Aorta (tissue), 5 donors: ENCODE measurements at regions of chr10 and their contacts with region 1.

Region 1: GRCh38 chr10:931416-932318 is at the start of gene LARP4B:
- DNase-seq: peak; percentile 98 to 99
- ATAC-seq: peak; percentile 100
- H3K4me3 ChIP-seq: peak within 1 kb of the TSS; percentile 97
- H3K27ac ChIP-seq: peak within 1 kb of the TSS; percentile 88 to 95
- H3K4me1 ChIP-seq: peaks cover 0 to 3% of the 10 kb centered on the region in 2 donors
- H3K27me3 ChIP-seq: no peaks in the 10 kb centered on the region
- total RNA-seq, gene LARP4B: 73.2 to 82.4 TPM

Region 2: GRCh38 chr10:683448-684071 is 248.1 kb before region 1 on chr10:
- intact Hi-C with region 1: loop called in 1 of 2 experiments (anchors 5 kb)
- DNase-seq: peak; percentile 72 to 86
- ATAC-seq: peak; percentile 87
- H3K4me3 ChIP-seq: no peak overlapping the region
- H3K27ac ChIP-seq: peak overlapping the region; percentile 15 to 49
- H3K4me1 ChIP-seq: no peaks in the 10 kb centered on the region
- H3K27me3 ChIP-seq: no peaks in the 10 kb centered on the region

Region 3: GRCh38 chr10:851901-852300 is 79.8 kb before region 1 on chr10:
- intact Hi-C with region 1: no loop called
- DNase-seq: no peak
- ATAC-seq: no peak
- H3K4me3 ChIP-seq: no peak overlapping the region
- H3K27ac ChIP-seq: no peak overlapping the region
- H3K4me1 ChIP-seq: peaks cover 0 to 3% of the 10 kb centered on the region in 2 donors
- H3K27me3 ChIP-seq: no peaks in the 10 kb centered on the region

Region 4: GRCh38 chr10:955820-956217 is 24.2 kb after region 1 on chr10:
- intact Hi-C with region 1: no loop called
- DNase-seq: no peak
- ATAC-seq: no peak
- H3K4me3 ChIP-seq: no peak overlapping the region
- H3K27ac ChIP-seq: no peak overlapping the region
- H3K4me1 ChIP-seq: no peaks in the 10 kb centered on the region
- H3K27me3 ChIP-seq: no peaks in the 10 kb centered on the region

Region 5: DNA sequence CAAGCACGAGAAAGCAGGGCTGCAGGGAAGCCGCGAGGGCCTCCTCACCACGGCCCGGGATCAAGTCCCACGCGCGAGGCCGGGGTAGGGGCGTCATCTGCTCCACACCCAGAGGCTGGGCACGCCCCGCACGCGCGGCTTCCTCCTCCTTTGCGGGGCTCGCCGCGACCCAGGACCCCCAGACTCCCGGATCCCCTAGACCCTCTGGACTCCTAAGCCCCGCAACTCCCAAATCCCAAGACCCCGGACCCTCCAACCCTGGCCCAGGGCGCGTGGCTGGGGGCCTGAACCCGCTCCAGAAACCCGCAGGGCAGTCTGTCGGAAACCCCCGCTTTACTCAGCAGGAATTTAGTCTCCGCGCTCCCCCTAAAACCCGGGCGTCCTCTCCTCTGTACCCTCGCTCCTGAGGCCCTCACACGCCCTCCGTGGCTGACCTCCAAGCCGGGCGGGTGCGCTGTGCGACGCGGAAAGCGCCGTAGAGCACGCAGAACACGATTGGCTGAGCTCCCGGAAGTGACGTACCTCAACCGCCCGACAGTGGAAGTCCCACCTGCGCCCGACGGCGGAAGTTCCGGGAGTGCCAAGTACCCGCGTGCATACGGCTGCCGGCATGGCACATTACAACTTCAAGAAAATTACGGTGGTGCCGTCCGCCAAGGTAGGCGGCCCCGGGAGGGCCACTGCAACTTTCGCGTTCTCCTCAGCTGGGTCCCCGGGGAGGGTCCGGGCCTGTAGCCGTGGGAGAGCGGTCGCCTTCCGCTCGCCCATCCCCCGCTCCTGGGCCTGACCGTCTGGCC is 56.4 kb after region 1 on chr10 and contains the start of gene GTPBP4:
- intact Hi-C with region 1: loop called in 1 of 2 experiments (anchors 5 kb)
- DNase-seq: peak; percentile 99 to 100
- ATAC-seq: peak; percentile 99
- H3K4me3 ChIP-seq: peak within 1 kb of the TSS; percentile 70 to 81
- H3K27ac ChIP-seq: peak within 1 kb of the TSS in 1 of 2 donors; percentile 62
- H3K4me1 ChIP-seq: no peaks in the 10 kb centered on the region
- H3K27me3 ChIP-seq: no peaks in the 10 kb centered on the region
- total RNA-seq, gene GTPBP4: 29.2 to 46.9 TPM

Region 6: DNA sequence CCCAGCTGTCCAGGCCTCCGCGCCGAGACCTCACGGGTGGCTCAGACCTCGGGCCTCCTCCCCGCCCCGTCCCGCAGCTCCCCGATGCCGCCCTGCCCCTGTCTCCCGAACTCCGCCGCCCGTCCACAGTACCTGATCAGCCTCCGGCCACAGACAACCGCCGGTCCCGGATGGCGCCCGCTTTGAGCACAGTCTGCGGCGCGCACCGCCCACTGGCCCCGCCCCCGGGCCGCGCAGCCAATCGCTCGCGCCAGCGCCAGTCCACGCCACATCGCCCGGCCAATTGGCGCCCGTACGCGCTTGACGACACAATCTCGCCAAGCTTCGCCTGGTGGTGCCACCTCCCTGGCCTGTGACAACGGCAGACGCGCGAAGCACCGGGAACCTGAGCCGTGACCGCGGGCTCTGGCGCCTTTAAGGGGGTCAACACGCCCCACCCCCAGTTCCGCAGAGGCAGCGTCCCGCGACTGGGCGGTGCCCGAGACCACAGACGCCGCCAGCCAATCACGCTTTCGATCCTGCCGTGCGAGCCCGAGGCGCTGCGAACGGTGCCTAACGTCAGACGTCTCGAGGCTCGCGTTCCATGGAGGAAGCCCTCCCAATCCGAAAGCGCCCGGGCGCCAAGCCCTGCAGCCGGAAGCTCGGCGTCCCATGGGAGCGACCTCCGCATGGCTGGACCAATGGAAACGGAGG is 117.2 kb after region 1 on chr10 and contains the start of gene IDI1:
- intact Hi-C with region 1: loop called in 1 of 2 experiments (anchors 5 kb)
- DNase-seq: peak; percentile 98 to 99
- ATAC-seq: peak; percentile 97
- H3K4me3 ChIP-seq: peak within 1 kb of the TSS; percentile 60 to 62
- H3K27ac ChIP-seq: peak within 1 kb of the TSS; percentile 91 to 94
- H3K4me1 ChIP-seq: no peaks in the 10 kb centered on the region
- H3K27me3 ChIP-seq: no peaks in the 10 kb centered on the region
- total RNA-seq, gene IDI1: 28.6 to 39.3 TPM